Activated T-helper 2 cell treated with anti-CD3 and anti-CD28 coated beads, Interferon-gamma antibody, Interleukin-2, Interleukin-4, amounts not matched to agents 10 μg/mL and 5 μg/mL and 100 μg/mL, durations not matched to agents 14 hours and 24 hours and 36 hours (primary cell): ENCODE measurements at regions of chr7 and their contacts with region 1.

Region 1: GRCh38 chr7:129952653-129953560 is at the start of gene UBE2H:
- DNase-seq: peak; percentile 80
- H3K4me3 Mint-ChIP-seq: peak within 1 kb of the TSS; percentile 99
- H3K27ac Mint-ChIP-seq: peak within 1 kb of the TSS; percentile 100
- H3K4me1 Mint-ChIP-seq: peaks cover 10% of the 10 kb centered on the region
- H3K27me3 Mint-ChIP-seq: peaks cover 8% of the 10 kb centered on the region
- total RNA-seq, gene UBE2H: 16.4 and 23.9 TPM in 2 replicates

Region 2: GRCh38 chr7:129224251-129225205 is 728.4 kb before region 1 on chr7 and contains the start of gene AHCYL2:
- intact Hi-C with region 1: loop called (anchors 2 kb)
- DNase-seq: peak; percentile 94
- H3K4me3 Mint-ChIP-seq: peak within 1 kb of the TSS; percentile 94
- H3K27ac Mint-ChIP-seq: peak within 1 kb of the TSS; percentile 96
- H3K4me1 Mint-ChIP-seq: peaks cover 22% of the 10 kb centered on the region
- H3K27me3 Mint-ChIP-seq: no peaks in the 10 kb centered on the region
- total RNA-seq, gene AHCYL2: 14.7 and 15.1 TPM in 2 replicates

Region 3: DNA sequence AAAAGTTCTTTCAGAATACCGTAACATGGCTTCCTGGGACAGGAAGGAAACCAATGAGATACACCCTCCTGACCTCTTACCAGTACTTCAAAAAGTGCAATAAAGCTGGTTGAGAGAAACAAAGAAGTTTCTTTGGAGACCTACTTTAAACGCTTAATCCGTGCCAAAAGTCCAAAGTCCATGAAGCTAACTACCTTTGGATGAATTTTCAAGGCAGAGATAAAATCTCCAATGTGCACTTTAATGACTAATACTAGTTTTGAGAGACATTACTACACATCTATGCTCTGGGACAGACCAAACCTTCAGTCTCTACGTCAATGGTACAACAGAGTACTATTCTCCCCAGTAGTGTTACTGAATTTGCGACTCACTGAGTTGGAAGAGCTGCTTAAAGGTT is 46.2 kb before region 1 on chr7:
- intact Hi-C with region 1: loop called (anchors 2 kb)
- DNase-seq: no peak
- H3K4me3 Mint-ChIP-seq: no peak overlapping the region
- H3K27ac Mint-ChIP-seq: no peak overlapping the region
- H3K4me1 Mint-ChIP-seq: peaks cover 43% of the 10 kb centered on the region
- H3K27me3 Mint-ChIP-seq: no peaks in the 10 kb centered on the region

Region 4: DNA sequence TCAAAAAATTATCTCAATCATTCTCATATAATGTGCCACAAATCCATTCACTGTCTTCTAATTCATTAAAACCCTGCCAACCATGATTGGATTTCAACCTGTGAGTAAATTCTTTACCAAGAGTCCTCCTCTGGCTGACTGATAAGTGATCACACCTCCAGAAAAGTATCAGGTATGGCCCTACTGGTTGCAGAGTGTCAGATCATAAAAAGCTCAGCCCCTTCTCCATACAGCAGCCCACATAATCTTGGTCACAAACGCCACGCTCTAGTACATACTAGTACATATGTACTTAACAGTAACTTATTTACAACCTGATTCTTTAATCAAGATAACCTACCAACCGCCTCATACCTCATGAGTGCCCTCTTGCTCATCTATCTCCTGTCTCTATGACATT is 26.3 kb before region 1 on chr7:
- intact Hi-C with region 1: no loop called
- DNase-seq: no peak
- H3K4me3 Mint-ChIP-seq: no peak overlapping the region
- H3K27ac Mint-ChIP-seq: no peak overlapping the region
- H3K4me1 Mint-ChIP-seq: peaks cover 16% of the 10 kb centered on the region
- H3K27me3 Mint-ChIP-seq: no peaks in the 10 kb centered on the region

Region 5: DNA sequence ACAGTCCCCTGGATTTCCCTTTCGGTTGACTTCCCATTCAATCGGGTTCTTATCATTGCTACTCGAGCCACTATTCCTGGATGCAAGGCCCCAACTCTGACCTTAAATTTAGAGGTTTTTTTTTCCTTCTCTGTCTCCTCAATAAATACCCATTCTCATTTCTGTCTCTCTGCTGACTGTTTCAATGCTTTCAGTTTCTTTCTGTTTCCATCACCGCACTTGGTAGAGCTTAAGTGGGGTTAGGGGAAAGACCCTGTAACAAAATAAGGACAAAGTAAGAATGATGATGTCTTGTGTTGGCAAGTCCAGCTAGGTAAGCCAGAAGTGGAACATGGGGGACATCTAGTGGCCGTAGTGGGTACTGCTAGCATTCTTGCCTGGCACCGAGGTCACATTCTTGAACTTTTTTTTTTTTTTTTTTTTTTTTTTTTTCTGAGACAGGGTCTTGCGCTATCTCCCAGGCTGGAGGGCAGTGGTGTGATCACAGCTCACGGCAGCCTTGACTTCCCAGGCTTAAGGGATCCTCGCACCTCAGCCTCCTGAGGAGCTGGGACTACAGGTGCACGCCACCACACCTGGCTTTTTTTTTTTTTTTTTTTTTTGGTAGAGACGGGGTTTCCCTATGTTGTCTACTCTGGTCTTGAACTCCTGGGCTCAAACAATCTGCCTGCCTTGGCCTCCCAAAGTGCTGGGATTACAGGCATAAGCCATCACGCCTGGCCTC is 57.9 kb after region 1 on chr7:
- intact Hi-C with region 1: loop called (anchors 5 kb)
- DNase-seq: peak; percentile 77
- H3K4me3 Mint-ChIP-seq: no peak overlapping the region
- H3K27ac Mint-ChIP-seq: peak overlapping the region; percentile 76
- H3K4me1 Mint-ChIP-seq: peaks cover 7% of the 10 kb centered on the region
- H3K27me3 Mint-ChIP-seq: no peaks in the 10 kb centered on the region